ENCODE measurements at regions of chr7 and their contacts with region 1.

Region 1: GRCh38 chr7:100691676-100692577 is 2.1 kb downstream of the GIGYF1 start:
- DNase-seq: peak; percentile 81 to 83
- ATAC-seq: peak; percentile 72 to 92 (median 86)
- H3K4me3 ChIP-seq: peak overlapping the region in 9 of 10 donors; percentile 3 to 99 (median 80)
- H3K27ac ChIP-seq: peak overlapping the region in 6 of 10 donors; percentile 15 to 87 (median 46)
- H3K4me1 ChIP-seq: peaks cover 34 to 67% (median 51%) of the 10 kb centered on the region in 9 donors
- H3K27me3 ChIP-seq: no peaks in the 10 kb centered on the region
- CTCF ChIP-seq: peak; percentile 70 to 92 (median 90)

Region 2: GRCh38 chr7:100563809-100564400 is 128.0 kb before region 1 on chr7:
- intact Hi-C with region 1: loop called (anchors 2 to 5 kb)
- DNase-seq: peak; percentile 82 to 83
- ATAC-seq: peak; percentile 41 to 78 (median 62)
- H3K4me3 ChIP-seq: no peak overlapping the region
- H3K27ac ChIP-seq: no peak overlapping the region
- H3K4me1 ChIP-seq: peaks cover 0 to 21% (median 4%) of the 10 kb centered on the region in 9 donors
- H3K27me3 ChIP-seq: no peaks in the 10 kb centered on the region
- CTCF ChIP-seq: peak; percentile 88 to 98 (median 94)

Region 3: GRCh38 chr7:100568896-100569844 is 122.8 kb before region 1 on chr7:
- intact Hi-C with region 1: loop called in 9 of 10 experiments (anchors 2 to 5 kb)
- DNase-seq: peak in 1 of 2 donors; percentile 40
- ATAC-seq: peak; percentile 12 to 48 (median 30)
- H3K4me3 ChIP-seq: peak overlapping the region in 9 of 10 donors; percentile 22 to 54 (median 43)
- H3K27ac ChIP-seq: peak overlapping the region in 2 of 10 donors; percentile 5 to 38
- H3K4me1 ChIP-seq: peaks cover 0 to 27% (median 15%) of the 10 kb centered on the region in 9 donors
- H3K27me3 ChIP-seq: peaks cover 0 to 18% (median 0%) of the 10 kb centered on the region in 7 donors
- CTCF ChIP-seq: peak in 7 of 9 donors; percentile 21 to 44 (median 32)

Region 4: GRCh38 chr7:100586266-100587025 is 105.5 kb before region 1 on chr7 and contains the start of gene FBXO24:
- intact Hi-C with region 1: loop called in 2 of 10 experiments (anchors 5 kb)
- DNase-seq: peak; percentile 100
- ATAC-seq: peak; percentile 91 to 97 (median 94)
- H3K4me3 ChIP-seq: peak within 1 kb of the TSS; percentile 80 to 100 (median 96)
- H3K27ac ChIP-seq: peak within 1 kb of the TSS; percentile 90 to 98 (median 94)
- H3K4me1 ChIP-seq: peaks cover 9 to 67% (median 52%) of the 10 kb centered on the region in 9 donors
- H3K27me3 ChIP-seq: peaks cover 0 to 14% (median 0%) of the 10 kb centered on the region in 7 donors
- CTCF ChIP-seq: peak in 1 of 9 donors; percentile 10
- total RNA-seq, gene FBXO24: 0.15 to 0.66 (median 0.40) TPM in 8 of 10 donors, not detected in the others

Region 5: GRCh38 chr7:100604028-100604975 is 87.6 kb before region 1 on chr7:
- intact Hi-C with region 1: loop called in 3 of 10 experiments (anchors 2 to 10 kb)
- DNase-seq: peak; percentile 75 to 86
- ATAC-seq: peak; percentile 76 to 86 (median 82)
- H3K4me3 ChIP-seq: peak overlapping the region; percentile 45 to 86 (median 74)
- H3K27ac ChIP-seq: peak overlapping the region; percentile 35 to 88 (median 80)
- H3K4me1 ChIP-seq: peaks cover 0 to 36% (median 23%) of the 10 kb centered on the region in 9 donors
- H3K27me3 ChIP-seq: peaks cover 0 to 11% (median 0%) of the 10 kb centered on the region in 7 donors
- CTCF ChIP-seq: peak in 8 of 9 donors; percentile 26 to 66 (median 55)

Region 6: GRCh38 chr7:100611974-100612729 is 79.8 kb before region 1 on chr7 and contains the start of gene MOSPD3:
- intact Hi-C with region 1: loop called in 3 of 10 experiments (anchors 5 to 10 kb)
- DNase-seq: peak; percentile 99
- ATAC-seq: peak; percentile 97 to 99 (median 98)
- H3K4me3 ChIP-seq: peak within 1 kb of the TSS; percentile 57 to 97 (median 83)
- H3K27ac ChIP-seq: peak within 1 kb of the TSS; percentile 65 to 97 (median 91)
- H3K4me1 ChIP-seq: peaks cover 0 to 20% (median 10%) of the 10 kb centered on the region in 9 donors
- H3K27me3 ChIP-seq: no peaks in the 10 kb centered on the region
- CTCF ChIP-seq: no peak
- total RNA-seq, gene MOSPD3: 8.0 to 12.5 (median 9.9) TPM